Activated CD4-positive, alpha-beta T cell treated with anti-CD3 and anti-CD28 coated beads, Interleukin-2, amount 10 ng/mL, durations not matched to agents 24 days and 14 days (primary cell): ENCODE measurements at regions of chr14 and their contacts with region 1.

Region 1: DNA sequence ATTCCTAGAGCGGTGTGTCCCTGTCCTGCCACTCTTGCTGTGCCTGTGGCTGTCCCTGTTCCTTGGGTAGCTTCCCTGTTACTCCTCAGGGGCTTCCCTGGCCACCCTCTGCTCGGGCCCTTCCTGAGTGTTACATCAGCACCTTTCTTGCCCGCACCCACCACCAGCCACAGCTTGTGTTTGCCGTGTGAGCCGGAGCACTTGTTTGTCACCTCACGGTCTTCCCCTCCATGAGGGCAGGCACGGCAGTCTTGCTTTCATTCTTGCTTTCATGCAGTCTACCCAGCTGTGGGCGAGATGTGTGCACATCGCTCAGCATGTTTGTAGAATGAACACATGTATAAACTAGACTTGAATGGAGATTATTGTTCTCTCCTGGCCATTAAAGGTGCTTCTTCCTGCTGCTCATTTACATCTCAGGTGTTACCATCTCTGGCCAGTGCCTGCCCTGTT is 42.0 kb downstream of the TRAF3 start:
- DNase-seq: peak; percentile 90
- H3K4me3 Mint-ChIP-seq: peak overlapping the region; percentile 83
- H3K27ac Mint-ChIP-seq: peak overlapping the region; percentile 94
- H3K4me1 Mint-ChIP-seq: peaks cover 70% of the 10 kb centered on the region
- H3K27me3 Mint-ChIP-seq: no peaks in the 10 kb centered on the region

Region 2: GRCh38 chr14:102362545-102363181 is 456.5 kb before region 1 on chr14 and contains the starts of genes CINP and TECPR2:
- intact Hi-C with region 1: loop called (anchors 5 kb)
- DNase-seq: peak; percentile 98
- H3K4me3 Mint-ChIP-seq: no peak within 1 kb of the TSS
- H3K27ac Mint-ChIP-seq: peak within 1 kb of the TSS; percentile 92
- H3K4me1 Mint-ChIP-seq: peaks cover 27% of the 10 kb centered on the region
- H3K27me3 Mint-ChIP-seq: peaks cover 2% of the 10 kb centered on the region
- total RNA-seq, gene CINP: 43.7 and 46.2 TPM in 2 replicates
- total RNA-seq, gene TECPR2: 6.4 and 7.4 TPM in 2 replicates

Region 3: DNA sequence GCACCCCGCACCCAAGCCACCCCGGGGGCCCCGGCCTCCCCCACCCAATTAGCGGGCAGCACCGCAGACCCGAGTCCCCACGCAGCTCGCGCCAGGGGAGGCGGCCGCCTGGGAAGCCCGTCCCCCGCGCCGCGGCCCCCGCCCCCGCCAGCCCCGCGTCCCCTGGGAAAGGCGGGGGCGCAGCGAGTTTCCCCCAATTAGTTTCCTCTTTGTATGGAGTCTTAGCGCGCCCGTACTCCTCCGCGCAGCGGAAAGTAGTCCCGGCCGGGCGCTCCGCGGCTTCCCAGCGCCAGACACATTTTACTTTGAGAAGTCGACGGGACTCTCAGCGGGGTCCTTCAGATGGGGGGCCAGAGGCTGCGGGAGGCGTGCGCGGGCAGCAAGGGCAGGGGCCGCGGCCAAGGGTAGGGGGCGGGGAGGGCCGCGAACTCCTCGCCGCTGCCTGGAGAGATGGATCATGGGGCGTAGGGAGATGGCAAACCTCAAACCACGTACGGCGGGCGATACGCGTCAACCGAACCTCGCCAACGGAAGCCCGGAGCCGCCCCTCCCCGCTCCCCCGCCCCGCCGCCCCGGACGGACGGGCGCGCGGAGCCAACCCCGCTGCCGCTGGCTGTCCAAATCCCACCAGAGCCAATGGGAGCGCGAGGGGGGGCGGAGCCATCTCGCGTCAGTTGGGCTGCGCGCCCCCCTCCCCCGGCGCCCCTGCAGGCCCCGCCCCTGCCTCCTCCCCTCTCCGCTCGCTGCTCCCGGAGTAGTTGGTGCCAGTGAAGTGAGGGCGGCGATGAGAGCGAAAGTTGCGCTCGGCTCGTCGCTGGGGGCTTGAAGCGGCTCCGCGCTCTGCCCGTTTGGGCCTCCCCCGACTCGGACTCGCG is 227.1 kb before region 1 on chr14 and contains the start of gene RCOR1:
- intact Hi-C with region 1: loop called (anchors 5 kb)
- DNase-seq: peak; percentile 99
- H3K4me3 Mint-ChIP-seq: peak within 1 kb of the TSS; percentile 94
- H3K27ac Mint-ChIP-seq: peak within 1 kb of the TSS; percentile 95
- H3K4me1 Mint-ChIP-seq: peaks cover 23% of the 10 kb centered on the region
- H3K27me3 Mint-ChIP-seq: peaks cover 4% of the 10 kb centered on the region
- total RNA-seq, gene RCOR1: 21.8 and 24.0 TPM in 2 replicates

Region 4: DNA sequence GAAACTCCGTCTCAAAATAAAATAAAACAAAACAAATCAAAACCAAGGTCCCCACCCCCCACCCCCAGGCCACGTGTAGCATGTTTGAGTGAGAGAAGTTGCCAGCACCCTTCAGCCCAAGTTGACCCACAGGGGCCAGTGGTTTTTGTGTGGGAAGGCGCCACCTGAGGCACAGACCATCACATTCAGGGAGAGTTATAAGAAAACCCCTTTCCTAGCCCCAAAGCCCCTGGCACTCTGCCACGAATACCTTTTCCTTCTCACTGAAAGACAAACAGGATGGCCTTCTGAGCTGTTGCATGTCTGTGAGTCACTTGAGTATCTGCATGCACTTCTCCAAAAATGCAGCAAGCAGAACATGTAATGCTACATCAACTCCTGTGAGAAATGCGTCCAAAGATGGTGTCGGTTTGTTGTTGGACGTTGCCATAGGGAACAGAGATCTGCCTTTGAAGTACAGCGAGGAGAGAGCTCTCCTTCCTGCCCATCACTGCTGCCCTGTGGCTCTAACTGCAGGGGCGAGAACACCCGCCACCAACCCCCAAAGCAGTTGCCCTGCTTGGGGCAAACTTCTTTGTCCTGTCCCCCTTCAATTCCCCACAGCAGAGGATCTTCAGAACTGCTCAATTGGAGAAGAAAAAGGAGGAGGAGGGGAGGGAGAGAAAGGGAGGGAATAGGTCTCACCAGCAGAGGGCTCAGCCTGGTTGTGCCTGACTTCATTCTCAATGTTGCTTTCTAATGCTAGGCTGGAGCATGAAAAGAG is 44.6 kb before region 1 on chr14:
- intact Hi-C with region 1: loop called (anchors 1 kb)
- DNase-seq: peak; percentile 90
- H3K4me3 Mint-ChIP-seq: peak overlapping the region; percentile 11
- H3K27ac Mint-ChIP-seq: peak overlapping the region; percentile 83
- H3K4me1 Mint-ChIP-seq: peaks cover 29% of the 10 kb centered on the region
- H3K27me3 Mint-ChIP-seq: no peaks in the 10 kb centered on the region

Region 5: DNA sequence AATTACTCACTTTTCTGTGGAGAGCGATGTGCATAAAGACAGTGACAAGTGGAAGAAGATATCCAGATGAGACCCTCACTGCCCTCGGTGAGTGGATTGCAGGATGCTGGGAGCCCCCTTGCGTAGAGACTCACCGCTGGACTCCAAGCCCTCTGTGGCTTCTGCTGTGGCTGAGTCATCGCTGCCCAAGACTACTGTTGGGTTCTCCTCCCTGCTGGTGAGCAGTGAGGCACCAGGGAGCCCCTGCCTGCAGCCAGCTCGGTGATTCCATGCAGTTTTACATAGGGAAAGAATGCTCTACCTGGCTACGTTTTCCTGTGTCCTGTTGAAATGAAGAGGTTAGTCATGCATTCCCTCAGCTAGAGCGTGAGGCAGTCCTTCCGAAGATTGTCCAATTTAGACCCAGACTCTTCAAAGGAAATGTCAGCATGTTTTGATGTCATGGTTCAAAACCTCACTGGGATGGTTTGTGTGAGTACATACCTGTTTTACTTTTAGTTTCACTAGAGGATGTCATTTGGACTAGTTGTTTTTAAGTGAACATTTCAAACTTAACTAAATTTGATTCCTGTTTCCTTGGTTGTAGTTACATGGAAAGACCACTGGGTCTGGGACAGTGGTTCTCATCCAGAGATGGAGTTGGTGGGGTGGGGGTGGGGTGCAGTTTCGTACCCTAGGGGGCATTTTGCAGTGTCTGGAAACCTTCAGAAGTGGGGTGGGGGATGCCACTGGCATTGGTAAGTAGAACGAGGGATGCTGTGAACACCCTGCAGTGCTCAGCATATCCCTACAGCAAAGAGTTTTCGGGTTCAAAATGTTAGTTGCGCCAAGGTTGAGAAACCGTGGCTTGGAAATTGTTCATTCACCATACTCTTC is 13.6 kb before region 1 on chr14:
- intact Hi-C with region 1: loop called (anchors 1 kb)
- DNase-seq: peak; percentile 85
- H3K4me3 Mint-ChIP-seq: peak overlapping the region; percentile 81
- H3K27ac Mint-ChIP-seq: peak overlapping the region; percentile 97
- H3K4me1 Mint-ChIP-seq: peaks cover 60% of the 10 kb centered on the region
- H3K27me3 Mint-ChIP-seq: no peaks in the 10 kb centered on the region

Region 6: DNA sequence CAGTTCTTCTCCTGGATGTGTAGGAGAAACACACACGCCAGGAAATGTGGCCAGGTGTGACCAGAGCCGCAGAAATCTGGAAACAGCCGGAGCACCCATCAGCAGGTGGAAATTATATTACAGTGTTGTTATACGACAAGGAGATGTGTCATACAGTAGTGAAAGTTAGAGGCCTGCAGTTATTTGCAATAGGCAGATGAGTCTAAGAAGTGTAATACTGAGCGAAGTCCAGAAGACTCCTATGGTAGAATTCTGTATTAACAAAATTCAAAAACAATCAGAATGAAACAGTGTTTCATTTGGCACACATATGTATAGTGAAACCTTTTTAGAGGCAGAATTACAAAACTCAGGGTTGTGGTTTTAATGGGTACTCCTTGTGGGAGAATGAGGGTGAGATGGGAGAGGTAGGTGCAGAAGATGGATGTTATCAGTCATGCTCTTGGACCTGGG is 63.9 kb after region 1 on chr14:
- intact Hi-C with region 1: loop called (anchors 1 kb)
- DNase-seq: no peak
- H3K4me3 Mint-ChIP-seq: no peak overlapping the region
- H3K27ac Mint-ChIP-seq: peak overlapping the region; percentile 80
- H3K4me1 Mint-ChIP-seq: peaks cover 16% of the 10 kb centered on the region
- H3K27me3 Mint-ChIP-seq: no peaks in the 10 kb centered on the region

Region 7: GRCh38 chr14:103002578-103003350 is 183.6 kb after region 1 on chr14:
- intact Hi-C with region 1: no loop called
- DNase-seq: no peak
- H3K4me3 Mint-ChIP-seq: no peak overlapping the region
- H3K27ac Mint-ChIP-seq: no peak overlapping the region
- H3K4me1 Mint-ChIP-seq: no peaks in the 10 kb centered on the region
- H3K27me3 Mint-ChIP-seq: no peaks in the 10 kb centered on the region